ENCODE measurements at regions of chr2 and their contacts with region 1.

Region 1: GRCh38 chr2:168920504-168921157 is 19.5 kb downstream of the G6PC2 start:
- DNase-seq: no peak
- ATAC-seq: no peak
- H3K4me3 ChIP-seq: no peak overlapping the region
- H3K27ac ChIP-seq: no peak overlapping the region
- H3K4me1 ChIP-seq: no peaks in the 10 kb centered on the region
- H3K27me3 ChIP-seq: no peaks in the 10 kb centered on the region

Region 2: DNA sequence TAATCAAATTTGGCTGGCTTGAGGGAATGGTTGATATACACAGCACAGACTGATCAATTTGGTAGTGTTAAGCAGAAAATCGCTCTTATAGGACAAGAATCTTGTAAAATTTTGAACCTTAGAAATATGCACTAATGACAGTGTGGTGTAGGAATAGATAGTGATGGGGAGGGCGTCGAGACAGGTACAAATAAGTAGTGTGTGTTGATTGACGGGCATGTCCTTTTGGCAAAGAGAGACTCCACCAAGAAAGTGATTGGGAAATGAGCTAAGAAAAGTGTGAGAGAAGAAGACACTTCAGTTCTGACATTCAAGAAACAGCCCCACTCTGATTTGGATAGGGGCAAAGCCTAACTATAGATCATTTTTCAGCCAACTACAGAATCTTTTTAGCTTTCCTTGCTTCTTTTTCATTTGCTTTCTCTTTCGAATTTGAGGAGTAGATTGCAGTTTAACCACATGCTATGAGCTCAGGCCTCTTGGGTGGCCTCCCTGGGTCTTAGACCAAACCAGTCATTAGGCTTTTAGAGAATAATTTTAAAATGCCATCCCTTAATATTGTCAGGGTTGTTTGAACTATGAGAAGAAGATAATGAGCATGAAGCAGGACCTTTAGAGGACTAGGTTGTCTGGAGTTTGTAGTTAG is 337.4 kb before region 1 on chr2:
- intact Hi-C with region 1: loop called in 1 of 2 experiments (anchors 10 kb)
- DNase-seq: no peak
- ATAC-seq: no peak
- H3K4me3 ChIP-seq: no peak overlapping the region
- H3K27ac ChIP-seq: no peak overlapping the region
- H3K4me1 ChIP-seq: peaks cover 0 to 4% of the 10 kb centered on the region in 2 donors
- H3K27me3 ChIP-seq: no peaks in the 10 kb centered on the region